SK-N-SH (cell line): ENCODE measurements at regions of chr15 and their contacts with region 1.

Region 1: DNA sequence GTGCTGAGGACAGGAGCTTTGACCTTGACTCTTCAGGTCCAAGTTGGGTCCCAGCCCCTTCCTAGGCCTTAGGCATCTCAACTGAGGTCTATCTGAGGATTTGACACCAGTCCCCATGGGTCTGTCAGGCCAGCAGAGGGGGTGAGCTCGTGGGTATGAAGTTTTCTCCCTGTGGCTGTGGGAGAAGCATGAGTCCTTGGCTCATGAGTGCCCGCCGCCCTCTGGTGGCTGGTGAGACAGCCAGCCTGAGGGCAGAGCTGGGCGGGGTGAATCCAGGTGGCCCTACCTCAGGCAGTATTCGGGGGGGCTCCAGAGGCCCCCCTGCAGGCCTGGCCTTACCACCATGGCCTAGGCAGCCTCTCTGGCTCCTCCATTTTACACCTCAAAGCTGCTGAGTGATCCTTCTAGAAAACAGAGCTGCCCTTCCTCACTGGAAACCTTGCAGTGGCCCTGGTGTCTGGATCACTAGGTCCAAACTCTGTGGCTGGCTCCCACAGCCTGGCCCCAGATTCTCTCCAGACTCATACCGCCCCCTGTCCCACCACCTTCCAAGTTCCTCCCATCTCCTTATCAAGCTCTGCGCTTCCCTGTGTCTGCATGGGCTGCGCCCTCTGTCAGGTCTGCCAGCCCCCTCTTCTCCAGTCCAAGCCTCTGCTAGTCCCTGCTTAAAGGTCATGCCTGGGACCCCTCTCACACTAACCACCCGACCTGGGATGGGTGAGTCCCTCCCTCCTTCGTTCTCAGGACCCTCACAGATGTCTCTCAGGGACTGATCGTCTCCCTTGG is 16.1 kb downstream of the SH2D7 start:
- DNase-seq: peak; percentile 87
- H3K4me3 ChIP-seq: peak overlapping the region in 1 of 2 experiments; percentile 4; a peak in 1 of 4 replicates
- H3K27ac ChIP-seq: no peak overlapping the region
- H3K4me1 ChIP-seq: no peaks in the 10 kb centered on the region; a peak in 1 of 4 replicates
- H3K27me3 ChIP-seq: no peaks in the 10 kb centered on the region
- CTCF ChIP-seq: peak; percentile 93
- EP300 ChIP-seq: no peak
- RAD21 ChIP-seq: peak; percentile 88

Region 2: GRCh38 chr15:77966540-77967290 is 141.8 kb before region 1 on chr15:
- CTCF ChIA-PET with region 1: interaction called, 175 read pairs
- POLR2A ChIA-PET with region 1: interaction called, 7 read pairs
- DNase-seq: peak; percentile 78
- H3K4me3 ChIP-seq: no peak overlapping the region; a peak in 1 of 4 replicates
- H3K27ac ChIP-seq: no peak overlapping the region
- H3K4me1 ChIP-seq: no peaks in the 10 kb centered on the region; a peak in 1 of 4 replicates
- H3K27me3 ChIP-seq: no peaks in the 10 kb centered on the region; the same call in 1 of the 2 replicates
- CTCF ChIP-seq: peak; percentile 94
- EP300 ChIP-seq: no peak
- RAD21 ChIP-seq: peak; percentile 96

Region 3: GRCh38 chr15:78018946-78019644 is 89.4 kb before region 1 on chr15:
- CTCF ChIA-PET with region 1: interaction called, 12 read pairs
- POLR2A ChIA-PET with region 1: no interaction called
- DNase-seq: no peak
- H3K4me3 ChIP-seq: no peak overlapping the region
- H3K27ac ChIP-seq: no peak overlapping the region
- H3K4me1 ChIP-seq: peaks cover 0 to 14% of the 10 kb centered on the region in 2 experiments; a peak in 2 of 4 replicates
- H3K27me3 ChIP-seq: no peaks in the 10 kb centered on the region
- CTCF ChIP-seq: no peak
- EP300 ChIP-seq: no peak
- RAD21 ChIP-seq: no peak

Region 4: GRCh38 chr15:78085928-78086327 is 22.6 kb before region 1 on chr15:
- CTCF ChIA-PET with region 1: interaction called, 11 read pairs
- POLR2A ChIA-PET with region 1: no interaction called
- DNase-seq: no peak
- H3K4me3 ChIP-seq: no peak overlapping the region
- H3K27ac ChIP-seq: peak overlapping the region in 1 of 2 experiments; percentile 51; a peak in 2 of 4 replicates
- H3K4me1 ChIP-seq: peaks cover 13 to 20% of the 10 kb centered on the region in 2 experiments; a peak in 3 of 4 replicates
- H3K27me3 ChIP-seq: no peaks in the 10 kb centered on the region
- CTCF ChIP-seq: no peak
- EP300 ChIP-seq: peak in 1 of 2 experiments; percentile 40; a peak in 1 of 4 replicates
- RAD21 ChIP-seq: no peak

Region 5: DNA sequence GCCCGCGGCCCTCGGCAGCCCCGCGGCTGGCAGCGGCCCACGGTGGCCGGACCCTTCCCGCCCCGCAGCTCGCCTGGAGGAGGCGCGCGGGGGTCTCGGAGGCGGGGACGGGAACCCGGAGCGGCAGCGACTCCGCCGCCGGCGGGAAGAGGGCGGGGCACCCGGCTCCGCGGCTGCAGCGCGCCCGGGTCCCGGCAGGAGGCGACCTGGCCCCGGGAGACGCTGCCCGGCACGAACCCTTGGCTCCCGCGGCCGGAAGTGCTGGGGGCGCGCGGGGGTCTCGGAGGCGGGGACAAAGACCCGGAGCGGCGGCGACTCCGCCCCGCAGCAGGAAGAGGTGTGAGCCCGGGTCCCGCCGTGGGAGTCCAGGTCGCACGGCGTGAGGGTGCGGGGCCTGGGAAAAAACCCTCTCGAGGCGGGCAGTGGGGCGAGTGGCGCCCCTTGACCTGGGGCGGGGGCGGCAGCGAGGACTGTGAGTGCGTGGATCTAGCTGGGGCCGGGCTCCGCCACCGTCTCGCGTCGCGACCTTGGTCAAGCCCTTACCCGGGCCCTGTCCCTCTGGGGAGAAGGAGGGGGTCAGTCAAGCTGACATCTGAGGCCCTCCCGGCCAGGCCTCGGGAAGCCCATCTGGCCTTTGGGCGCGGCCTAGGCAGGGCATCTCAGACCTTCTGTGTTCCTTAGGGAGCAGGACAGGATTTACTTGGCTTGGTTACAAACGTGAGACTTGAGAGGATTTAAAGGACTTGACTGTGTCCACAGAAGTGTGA is 23.0 kb after region 1 on chr15 and contains the start of gene CIB2:
- CTCF ChIA-PET with region 1: interaction called, 28 read pairs
- POLR2A ChIA-PET with region 1: no interaction called
- DNase-seq: peak; percentile 99
- H3K4me3 ChIP-seq: peak within 1 kb of the TSS; percentile 68 to 81
- H3K27ac ChIP-seq: peak within 1 kb of the TSS; percentile 48 to 74
- H3K4me1 ChIP-seq: peaks cover 0 to 7% of the 10 kb centered on the region in 2 experiments; a peak in 1 of 4 replicates
- H3K27me3 ChIP-seq: no peaks in the 10 kb centered on the region
- CTCF ChIP-seq: peak; percentile 57
- EP300 ChIP-seq: peak in 1 of 2 experiments; percentile 10; a peak in 1 of 4 replicates
- RAD21 ChIP-seq: peak; percentile 62
- polyA plus RNA-seq, gene CIB2: 39.6 and 40.8 TPM in 2 replicates

Region 6: GRCh38 chr15:78241007-78241406 is 132.5 kb after region 1 on chr15:
- CTCF ChIA-PET with region 1: interaction called, 168 read pairs
- POLR2A ChIA-PET with region 1: no interaction called
- DNase-seq: peak; percentile 93
- H3K4me3 ChIP-seq: peak overlapping the region in 1 of 2 experiments; percentile 35; a peak in 1 of 4 replicates
- H3K27ac ChIP-seq: no peak overlapping the region
- H3K4me1 ChIP-seq: peaks cover 0 to 12% of the 10 kb centered on the region in 2 experiments; a peak in 1 of 4 replicates
- H3K27me3 ChIP-seq: peaks cover 5% of the 10 kb centered on the region; the same call in 1 of the 2 replicates
- CTCF ChIP-seq: peak; percentile 88
- EP300 ChIP-seq: peak in 1 of 2 experiments; percentile 13; a peak in 1 of 4 replicates
- RAD21 ChIP-seq: peak; percentile 95

Region 7: DNA sequence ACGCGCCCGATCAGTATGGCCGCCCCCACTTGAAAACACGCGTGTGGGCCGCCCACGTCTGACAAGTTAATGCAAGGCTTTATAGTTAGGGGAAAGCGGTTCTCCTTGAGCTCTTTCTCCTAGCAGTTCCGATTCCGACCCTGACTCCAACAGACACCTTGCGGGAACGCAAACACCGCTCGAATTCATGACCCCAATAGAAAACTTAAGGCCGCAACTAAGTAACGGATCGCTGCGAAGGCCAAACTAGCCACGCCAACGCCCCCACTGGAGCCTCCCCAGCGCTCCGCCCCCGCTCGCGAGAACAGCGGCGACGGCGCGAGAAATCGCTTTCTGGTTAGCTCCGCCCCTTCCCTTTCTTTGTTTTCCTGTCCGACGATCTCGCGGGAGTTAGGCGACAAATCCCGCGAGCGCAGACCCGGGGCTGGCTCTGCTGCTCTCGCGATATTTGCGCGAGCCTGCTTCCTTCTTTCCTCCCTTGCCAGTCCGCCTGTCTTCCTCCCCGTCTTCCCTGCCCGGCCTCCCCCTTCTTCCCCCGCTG is 329.3 kb after region 1 on chr15 and contains the start of gene IREB2:
- CTCF ChIA-PET with region 1: no interaction called
- POLR2A ChIA-PET with region 1: no interaction called
- DNase-seq: peak; percentile 99
- H3K4me3 ChIP-seq: peak within 1 kb of the TSS; percentile 85 to 91
- H3K27ac ChIP-seq: peak within 1 kb of the TSS; percentile 91 to 92
- H3K4me1 ChIP-seq: peaks cover 12 to 15% of the 10 kb centered on the region in 2 experiments; a peak in 3 of 4 replicates
- H3K27me3 ChIP-seq: no peaks in the 10 kb centered on the region
- CTCF ChIP-seq: no peak
- EP300 ChIP-seq: peak in 1 of 2 experiments; percentile 18; a peak in 1 of 4 replicates
- RAD21 ChIP-seq: no peak
- polyA plus RNA-seq, gene IREB2: 9.5 and 13.7 TPM in 2 replicates